Ascending aorta (tissue), 2 donors: ENCODE measurements at regions of chrX and their contacts with region 1.

Region 1: DNA sequence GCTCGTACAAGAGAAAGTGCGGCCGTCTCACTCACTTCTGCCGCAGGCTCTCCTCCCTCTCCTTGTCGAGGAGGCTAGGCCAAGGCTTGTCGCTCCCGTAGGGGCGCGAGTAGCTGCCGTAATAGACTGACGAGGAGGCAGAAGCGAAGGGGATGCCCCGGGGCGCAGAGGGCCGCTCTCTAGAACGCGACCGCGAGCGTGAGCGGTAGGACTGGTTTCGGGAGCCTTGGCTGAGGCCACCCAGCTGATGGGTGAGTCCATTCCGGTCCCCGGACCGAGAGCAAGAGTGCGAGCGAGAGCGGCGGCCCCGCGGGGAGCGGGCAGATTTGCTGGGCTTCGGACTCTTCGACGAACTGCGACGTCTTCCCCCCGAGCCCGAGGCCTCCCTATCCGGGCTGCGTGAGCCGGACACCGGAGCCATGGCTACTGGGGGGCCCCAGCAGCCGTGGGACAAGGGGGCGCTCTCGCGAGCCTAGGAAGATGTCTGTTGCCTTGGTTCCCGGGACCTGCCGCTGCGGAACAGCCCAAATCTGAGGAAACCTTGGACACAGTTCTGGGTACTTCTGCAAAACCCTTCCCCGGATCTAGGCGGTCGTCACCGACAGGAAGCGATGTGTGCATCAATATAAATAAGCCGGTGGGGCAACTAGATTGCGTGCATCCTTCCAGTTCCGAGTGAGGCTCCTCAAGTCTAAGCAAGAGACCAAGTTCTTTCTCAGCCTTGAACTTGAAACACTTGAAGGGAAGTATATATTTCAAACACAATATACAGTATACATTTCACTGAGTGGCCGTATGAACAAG is at the start of gene NKAP:
- DNase-seq: peak; percentile 31 to 89
- H3K4me3 ChIP-seq: peak within 1 kb of the TSS; percentile 70 to 74
- H3K27ac ChIP-seq: peak within 1 kb of the TSS; percentile 89 to 91
- H3K4me1 ChIP-seq: peaks cover 0 to 5% of the 10 kb centered on the region in 2 donors
- H3K27me3 ChIP-seq: no peaks in the 10 kb centered on the region
- CTCF ChIP-seq: no peak
- total RNA-seq, gene NKAP: 1.2 TPM

Region 2: DNA sequence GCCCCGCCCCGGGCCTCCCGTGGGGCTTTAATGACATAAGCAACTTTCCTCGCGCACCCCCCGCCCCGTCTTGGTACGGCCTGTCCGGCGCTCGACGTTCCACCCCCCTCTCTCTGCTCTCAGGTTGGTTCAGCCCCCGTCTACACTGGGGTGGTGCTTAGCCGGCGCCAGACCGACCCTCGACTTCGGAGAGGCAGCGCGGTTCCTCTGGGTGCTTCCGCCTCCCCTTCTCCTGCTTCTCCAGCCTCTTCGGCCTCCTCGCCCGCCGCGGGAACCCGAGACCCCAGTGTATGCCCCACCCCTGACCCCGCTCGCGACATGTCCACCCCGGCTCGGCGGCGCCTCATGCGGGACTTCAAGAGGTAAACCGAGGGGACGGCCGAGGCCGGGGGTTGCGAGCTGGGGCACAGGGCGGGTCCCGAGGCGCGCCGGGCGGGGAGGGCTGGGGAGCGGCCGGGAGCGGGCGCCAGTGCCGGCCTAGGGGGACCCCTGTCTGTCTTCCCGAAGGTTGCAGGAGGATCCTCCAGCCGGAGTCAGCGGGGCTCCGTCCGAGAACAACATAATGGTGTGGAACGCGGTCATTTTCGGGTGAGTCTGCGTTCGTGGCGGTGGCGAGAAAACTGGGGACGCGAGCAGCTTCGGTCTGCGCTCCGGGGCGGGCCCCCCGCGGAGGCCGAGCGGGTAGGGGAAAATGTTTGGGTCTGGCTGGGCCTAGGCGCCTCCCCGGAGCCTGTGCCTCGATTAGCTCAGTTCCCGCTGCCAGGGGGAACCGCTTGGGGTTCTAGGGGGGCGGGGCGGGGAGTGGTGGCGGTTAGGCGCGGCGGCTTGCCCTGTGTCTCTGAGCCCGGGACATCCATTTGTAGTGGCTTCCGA is 368.8 kb before region 1 on chrX and contains the start of gene UBE2A:
- intact Hi-C with region 1: loop called (anchors 10 kb)
- DNase-seq: peak; percentile 45 to 93
- H3K4me3 ChIP-seq: peak within 1 kb of the TSS; percentile 64 to 92
- H3K27ac ChIP-seq: peak within 1 kb of the TSS; percentile 94 to 95
- H3K4me1 ChIP-seq: peaks cover 0 to 5% of the 10 kb centered on the region in 2 donors
- H3K27me3 ChIP-seq: no peaks in the 10 kb centered on the region
- CTCF ChIP-seq: peak; percentile 7 to 50 (median 30)
- total RNA-seq, gene UBE2A: 28.4 TPM

Region 3: DNA sequence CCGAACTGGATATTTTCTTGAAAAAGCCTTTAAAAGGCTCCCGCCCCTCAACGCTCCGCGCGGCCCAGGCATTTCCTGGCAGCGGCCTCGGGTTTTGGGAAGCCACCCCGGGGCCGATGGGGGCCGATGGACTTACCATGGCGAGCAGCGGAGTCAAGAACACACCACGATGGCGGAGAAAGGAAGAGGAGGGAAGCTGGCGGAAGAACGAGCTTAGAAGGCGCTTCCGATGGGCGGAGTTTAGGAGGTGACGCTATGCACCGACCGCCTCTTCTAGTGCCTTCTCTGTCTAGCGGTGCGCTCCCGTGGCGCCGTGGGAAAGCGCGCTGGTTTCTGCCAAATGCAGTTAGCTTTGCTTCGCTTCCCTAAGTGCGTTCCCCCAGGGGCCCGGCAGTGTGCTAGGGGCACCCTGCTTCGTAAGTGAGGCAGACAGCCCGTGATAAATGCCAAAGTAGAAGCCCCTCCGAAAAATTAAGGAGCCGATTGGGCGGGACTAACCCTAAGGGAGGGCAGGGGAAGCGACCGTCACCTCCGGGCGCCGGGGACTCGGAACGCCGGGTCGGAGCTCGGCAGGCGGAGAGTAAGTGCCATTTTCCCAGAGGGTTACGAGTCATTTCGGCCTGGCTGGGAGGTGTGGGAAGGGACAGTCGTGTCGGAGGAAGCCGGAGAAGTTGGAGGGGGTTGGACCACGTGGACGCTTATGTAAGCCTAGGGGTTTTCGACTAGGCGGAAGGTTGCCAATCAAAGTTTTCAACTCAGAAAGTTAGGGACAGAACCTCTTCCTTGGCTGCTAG is 151.8 kb before region 1 on chrX and contains the start of gene RPL39:
- intact Hi-C with region 1: loop called (anchors 5 kb)
- DNase-seq: peak; percentile 45 to 88
- H3K4me3 ChIP-seq: peak within 1 kb of the TSS; percentile 59 to 82
- H3K27ac ChIP-seq: peak within 1 kb of the TSS; percentile 88 to 95
- H3K4me1 ChIP-seq: peaks cover 2 to 13% of the 10 kb centered on the region in 2 donors
- H3K27me3 ChIP-seq: no peaks in the 10 kb centered on the region
- CTCF ChIP-seq: no peak
- total RNA-seq, gene RPL39: 2,929 TPM

Region 4: DNA sequence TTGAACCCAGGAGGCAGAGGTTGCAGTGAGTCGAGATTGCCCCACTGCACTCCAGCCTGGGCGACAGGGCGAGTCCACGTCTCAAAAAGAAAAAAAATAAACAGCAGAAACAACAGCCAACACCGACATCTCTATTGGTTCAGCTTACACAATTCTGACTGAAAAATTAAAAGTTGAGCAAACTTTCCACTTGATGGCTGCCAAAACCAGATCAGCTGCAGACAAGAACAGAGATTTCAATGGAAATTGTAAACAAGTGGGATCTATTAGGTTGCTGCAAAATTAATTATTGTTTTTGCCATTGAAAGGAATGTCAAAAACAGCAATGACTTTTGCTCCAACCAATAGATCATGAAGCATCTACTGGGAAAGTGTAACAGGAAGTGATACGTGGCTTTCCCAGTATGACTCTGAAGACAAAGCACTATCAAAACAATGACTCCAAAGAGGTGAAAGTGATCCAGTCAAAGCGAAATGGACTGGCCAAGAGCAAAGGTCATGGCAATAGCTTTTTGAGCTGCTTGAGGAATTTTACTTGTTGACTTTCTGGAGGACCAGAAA is 116.9 kb before region 1 on chrX:
- intact Hi-C with region 1: no loop called
- DNase-seq: no peak
- H3K4me3 ChIP-seq: no peak overlapping the region
- H3K27ac ChIP-seq: no peak overlapping the region
- H3K4me1 ChIP-seq: no peaks in the 10 kb centered on the region
- H3K27me3 ChIP-seq: no peaks in the 10 kb centered on the region
- CTCF ChIP-seq: no peak

Region 5: GRCh38 chrX:119871599-119872395 is 71.6 kb before region 1 on chrX and contains the starts of genes NDUFA1 and RNF113A:
- intact Hi-C with region 1: loop called (anchors 5 kb)
- DNase-seq: peak; percentile 31 to 89
- H3K4me3 ChIP-seq: peak within 1 kb of the TSS; percentile 54 to 66
- H3K27ac ChIP-seq: peak within 1 kb of the TSS; percentile 90 to 93
- H3K4me1 ChIP-seq: peaks cover 0 to 5% of the 10 kb centered on the region in 2 donors
- H3K27me3 ChIP-seq: no peaks in the 10 kb centered on the region
- CTCF ChIP-seq: no peak
- total RNA-seq, gene NDUFA1: 24.5 TPM
- total RNA-seq, gene RNF113A: 8.8 TPM

Region 6: GRCh38 chrX:120015145-120016067 is 72.0 kb after region 1 on chrX:
- intact Hi-C with region 1: no loop called
- DNase-seq: no peak
- H3K4me3 ChIP-seq: peak overlapping the region; percentile 25 to 53
- H3K27ac ChIP-seq: no peak overlapping the region
- H3K4me1 ChIP-seq: no peaks in the 10 kb centered on the region
- H3K27me3 ChIP-seq: no peaks in the 10 kb centered on the region
- CTCF ChIP-seq: no peak

Region 7: DNA sequence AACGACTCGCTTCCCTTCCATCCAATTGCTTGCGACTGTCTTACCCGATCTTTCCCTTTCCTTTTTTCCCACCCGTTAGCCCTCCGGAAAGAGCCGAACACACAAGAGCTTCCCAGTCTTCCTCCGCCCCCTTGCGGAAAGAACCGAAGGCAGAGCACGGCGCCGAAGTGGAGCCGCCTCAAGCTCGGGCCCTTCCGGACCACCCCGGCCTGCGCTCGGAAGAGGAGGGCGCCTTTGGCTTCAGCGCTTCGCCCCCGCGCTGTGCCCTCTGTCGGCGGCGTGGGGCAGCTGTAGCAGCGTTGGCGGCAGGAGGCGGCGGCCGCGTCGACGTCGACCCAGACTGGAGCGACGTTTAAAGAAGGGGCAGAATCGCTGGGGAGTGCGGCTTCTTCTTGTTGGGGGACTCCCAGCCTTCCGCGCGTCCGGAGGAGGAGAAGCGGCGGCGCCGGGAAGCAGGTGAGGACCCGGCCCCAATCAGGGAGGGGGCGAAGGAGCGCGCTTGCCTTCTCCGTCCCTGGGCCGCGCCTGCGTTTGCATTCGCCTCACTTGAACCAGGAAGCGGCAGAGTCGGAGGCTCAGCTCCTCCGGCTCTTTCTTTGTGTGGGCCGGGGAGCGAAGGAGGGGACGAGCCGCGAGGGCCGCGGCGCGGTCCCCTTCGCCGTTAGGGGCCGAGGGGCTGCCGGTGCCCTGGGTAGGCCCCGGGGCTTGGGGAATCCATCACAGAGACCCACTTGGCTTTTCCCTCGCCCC is 307.3 kb after region 1 on chrX and contains the start of gene ZBTB33:
- intact Hi-C with region 1: loop called (anchors 2 kb)
- DNase-seq: peak; percentile 66 to 95
- H3K4me3 ChIP-seq: peak within 1 kb of the TSS; percentile 57 to 63
- H3K27ac ChIP-seq: peak within 1 kb of the TSS; percentile 87 to 93
- H3K4me1 ChIP-seq: no peaks in the 10 kb centered on the region
- H3K27me3 ChIP-seq: no peaks in the 10 kb centered on the region
- CTCF ChIP-seq: peak; percentile 61 to 64 (median 62)
- total RNA-seq, gene ZBTB33: 3.6 TPM